ENCODE measurements at regions of chr4 and their contacts with region 1.

Region 1: GRCh38 chr4:55654131-55654530 is 18.0 kb upstream of the NMU start:
- DNase-seq: no peak
- ATAC-seq: no peak
- H3K4me3 ChIP-seq: no peak overlapping the region
- H3K27ac ChIP-seq: no peak overlapping the region
- H3K4me1 ChIP-seq: no peaks in the 10 kb centered on the region
- H3K27me3 ChIP-seq: no peaks in the 10 kb centered on the region
- CTCF ChIP-seq: no peak
- POLR2A ChIP-seq: no peak
- RAD21 ChIP-seq: no peak

Region 2: DNA sequence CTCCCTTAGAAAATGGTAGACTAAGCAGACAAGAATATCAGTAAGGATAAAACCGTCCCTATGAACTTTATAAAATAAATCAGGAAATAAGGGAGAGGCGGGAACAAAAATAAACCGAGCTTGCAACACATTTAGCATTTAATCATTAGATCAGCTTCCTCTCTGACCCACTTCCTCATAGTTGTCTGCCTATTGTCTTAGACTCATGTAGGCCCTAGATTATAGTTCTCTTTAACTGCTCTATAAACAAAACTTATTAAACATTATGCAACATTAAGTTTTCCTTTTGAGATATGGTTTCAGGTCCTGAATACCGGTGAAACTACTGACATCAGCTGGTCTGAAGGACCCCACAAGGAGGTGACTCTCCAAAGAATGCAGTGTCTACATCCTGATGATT is 323.9 kb before region 1 on chr4:
- CTCF ChIA-PET with region 1: no interaction called
- POLR2A ChIA-PET with region 1: no interaction called
- dilution Hi-C with region 1: no loop called
- in situ Hi-C with region 1: no loop called
- intact Hi-C with region 1: loop called (anchors 5 kb)
- DNase-seq: no peak
- ATAC-seq: no peak
- H3K4me3 ChIP-seq: no peak overlapping the region
- H3K27ac ChIP-seq: no peak overlapping the region
- H3K4me1 ChIP-seq: no peaks in the 10 kb centered on the region
- H3K27me3 ChIP-seq: 0 out of 2 replicates have a peak, but pooled peaks cover 1% of the 10 kb centered on the region
- CTCF ChIP-seq: no peak
- POLR2A ChIP-seq: no peak
- RAD21 ChIP-seq: no peak